Gastrocnemius medialis (tissue), 4 donors: ENCODE measurements at regions of chr20 and their contacts with region 1.

Region 1: GRCh38 chr20:44193801-44194200 is 6.8 kb upstream of the JPH2 start:
- DNase-seq: no peak
- ATAC-seq: no peak
- H3K4me3 ChIP-seq: no peak overlapping the region
- H3K27ac ChIP-seq: no peak overlapping the region
- H3K4me1 ChIP-seq: peaks cover 12 to 13% of the 10 kb centered on the region in 2 donors
- H3K27me3 ChIP-seq: no peaks in the 10 kb centered on the region
- CTCF ChIP-seq: no peak
- POLR2A ChIP-seq: no peak

Region 2: GRCh38 chr20:42775037-42775436 is 1418.8 kb before region 1 on chr20:
- in situ Hi-C with region 1: no loop called
- intact Hi-C with region 1: no loop called
- DNase-seq: no peak
- ATAC-seq: no peak
- H3K4me3 ChIP-seq: no peak overlapping the region
- H3K27ac ChIP-seq: no peak overlapping the region
- H3K4me1 ChIP-seq: no peaks in the 10 kb centered on the region
- H3K27me3 ChIP-seq: no peaks in the 10 kb centered on the region
- CTCF ChIP-seq: no peak
- POLR2A ChIP-seq: no peak

Region 3: GRCh38 chr20:44104798-44105517 is 88.8 kb before region 1 on chr20:
- in situ Hi-C with region 1: loop called in 1 of 4 experiments (anchors 5 kb)
- intact Hi-C with region 1: no loop called
- DNase-seq: peak; percentile 66 to 77
- ATAC-seq: peak; percentile 82 to 93
- H3K4me3 ChIP-seq: no peak overlapping the region
- H3K27ac ChIP-seq: peak overlapping the region in 3 of 4 donors; percentile 29 to 55 (median 33)
- H3K4me1 ChIP-seq: peaks cover 4 to 11% of the 10 kb centered on the region in 2 donors
- H3K27me3 ChIP-seq: no peaks in the 10 kb centered on the region
- CTCF ChIP-seq: no peak
- POLR2A ChIP-seq: no peak

Region 4: DNA sequence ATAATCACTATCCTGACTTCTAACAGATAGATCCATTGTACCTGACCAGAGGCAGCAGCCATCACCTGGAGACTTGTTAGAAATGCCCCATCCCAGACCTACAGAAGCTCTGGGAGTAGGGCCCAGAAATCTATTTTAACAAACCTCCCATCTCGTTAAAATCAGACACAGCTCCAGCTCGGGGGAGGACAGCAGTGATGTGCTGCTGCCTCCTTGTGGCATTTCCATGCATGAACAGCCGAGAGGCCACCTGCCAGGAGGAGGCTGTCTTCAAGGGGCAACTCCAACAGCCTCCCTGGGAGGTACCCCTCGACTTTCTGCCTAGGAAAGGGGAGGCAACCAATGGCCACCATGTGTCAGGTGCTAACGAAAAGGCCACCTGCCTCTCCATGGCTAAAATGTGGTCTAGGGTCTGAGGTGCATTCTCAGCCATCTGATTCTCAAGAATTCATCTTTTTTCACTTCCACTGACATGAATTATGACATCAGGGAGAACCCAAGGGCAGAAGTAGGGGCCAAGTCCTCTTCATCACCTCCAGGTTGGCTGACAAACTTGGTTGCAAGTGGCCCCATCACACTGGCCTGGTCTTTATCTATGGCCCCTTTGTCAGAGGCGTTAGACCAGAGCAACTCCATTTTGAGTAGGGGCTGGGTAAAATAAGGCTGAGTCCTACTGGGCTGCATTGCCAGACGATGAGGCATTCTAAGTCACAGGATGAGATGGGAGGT is 539.7 kb after region 1 on chr20:
- in situ Hi-C with region 1: no loop called
- intact Hi-C with region 1: no loop called
- DNase-seq: peak; percentile 53 to 70
- ATAC-seq: peak; percentile 37 to 45
- H3K4me3 ChIP-seq: no peak overlapping the region
- H3K27ac ChIP-seq: no peak overlapping the region
- H3K4me1 ChIP-seq: peaks cover 30 to 36% of the 10 kb centered on the region in 2 donors
- H3K27me3 ChIP-seq: no peaks in the 10 kb centered on the region
- CTCF ChIP-seq: peak; percentile 94 to 98 (median 96)
- POLR2A ChIP-seq: no peak